Naive thymus-derived CD8-positive, alpha-beta T cell (primary cell): ENCODE measurements at regions of chr16 and their contacts with region 1.

Region 1: DNA sequence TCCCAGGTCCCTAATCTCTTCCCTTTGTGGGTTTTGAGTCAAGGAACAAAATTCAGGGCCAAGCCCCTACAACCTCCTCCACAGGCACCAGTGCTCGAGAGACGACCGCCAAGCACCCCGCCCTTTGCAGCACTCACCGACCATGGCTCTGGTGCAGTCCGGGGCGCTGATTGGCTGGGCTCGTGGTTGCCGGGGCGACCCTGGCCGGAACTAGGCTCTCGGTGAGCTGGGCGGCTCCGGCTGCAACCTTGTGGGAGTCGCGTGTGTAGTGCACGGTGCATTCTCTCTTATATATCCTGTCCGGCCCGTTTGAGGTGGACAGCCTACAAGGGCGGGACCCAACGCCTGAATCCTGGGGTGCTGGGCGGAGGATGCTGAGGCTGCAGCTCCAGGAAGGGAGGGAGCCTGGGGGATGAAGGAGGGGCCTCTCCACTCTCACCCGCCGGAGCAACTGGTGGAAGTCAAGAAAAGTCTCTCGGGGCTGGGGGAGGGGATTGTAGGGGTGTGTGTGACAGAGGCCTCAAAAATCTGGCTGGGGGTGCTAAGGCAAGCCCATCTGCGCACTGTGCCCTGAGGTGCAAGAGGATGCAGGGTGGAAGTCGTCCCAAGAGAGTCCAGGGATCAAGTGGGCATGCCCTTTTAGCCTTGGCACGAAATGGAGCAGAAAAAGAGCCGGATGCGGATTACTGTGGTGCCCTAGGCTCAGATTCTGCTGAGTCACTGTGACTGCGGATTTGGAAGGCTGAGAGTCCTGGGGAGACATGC is at the start of gene NQO1:
- DNase-seq: peak; percentile 66 to 92 (median 81)
- ATAC-seq: peak; percentile 98 to 99
- H3K4me3 Mint-ChIP-seq: peak within 1 kb of the TSS; percentile 88 to 98 (median 94)
- H3K27ac Mint-ChIP-seq: peak within 1 kb of the TSS; percentile 81 to 97 (median 91)
- H3K4me1 Mint-ChIP-seq: peaks cover 11 to 37% (median 25%) of the 10 kb centered on the region in 4 donors
- H3K27me3 Mint-ChIP-seq: peaks cover 0 to 2% (median 0%) of the 10 kb centered on the region in 5 donors
- polyA plus RNA-seq, gene NQO1: 2.5 to 4.1 (median 3.0) TPM

Region 2: GRCh38 chr16:69754469-69755310 is 28.2 kb after region 1 on chr16 and contains the start of gene NOB1:
- POLR2A ChIA-PET with region 1: interaction called, 28 read pairs
- DNase-seq: peak; percentile 91 to 99 (median 97)
- ATAC-seq: peak; percentile 98
- H3K4me3 Mint-ChIP-seq: peak within 1 kb of the TSS; percentile 96 to 100 (median 100)
- H3K27ac Mint-ChIP-seq: peak within 1 kb of the TSS; percentile 98 to 100 (median 99)
- H3K4me1 Mint-ChIP-seq: peaks cover 8 to 35% (median 28%) of the 10 kb centered on the region in 4 donors
- H3K27me3 Mint-ChIP-seq: no peaks in the 10 kb centered on the region
- polyA plus RNA-seq, gene NOB1: 35.1 to 60.3 (median 48.6) TPM

Region 3: DNA sequence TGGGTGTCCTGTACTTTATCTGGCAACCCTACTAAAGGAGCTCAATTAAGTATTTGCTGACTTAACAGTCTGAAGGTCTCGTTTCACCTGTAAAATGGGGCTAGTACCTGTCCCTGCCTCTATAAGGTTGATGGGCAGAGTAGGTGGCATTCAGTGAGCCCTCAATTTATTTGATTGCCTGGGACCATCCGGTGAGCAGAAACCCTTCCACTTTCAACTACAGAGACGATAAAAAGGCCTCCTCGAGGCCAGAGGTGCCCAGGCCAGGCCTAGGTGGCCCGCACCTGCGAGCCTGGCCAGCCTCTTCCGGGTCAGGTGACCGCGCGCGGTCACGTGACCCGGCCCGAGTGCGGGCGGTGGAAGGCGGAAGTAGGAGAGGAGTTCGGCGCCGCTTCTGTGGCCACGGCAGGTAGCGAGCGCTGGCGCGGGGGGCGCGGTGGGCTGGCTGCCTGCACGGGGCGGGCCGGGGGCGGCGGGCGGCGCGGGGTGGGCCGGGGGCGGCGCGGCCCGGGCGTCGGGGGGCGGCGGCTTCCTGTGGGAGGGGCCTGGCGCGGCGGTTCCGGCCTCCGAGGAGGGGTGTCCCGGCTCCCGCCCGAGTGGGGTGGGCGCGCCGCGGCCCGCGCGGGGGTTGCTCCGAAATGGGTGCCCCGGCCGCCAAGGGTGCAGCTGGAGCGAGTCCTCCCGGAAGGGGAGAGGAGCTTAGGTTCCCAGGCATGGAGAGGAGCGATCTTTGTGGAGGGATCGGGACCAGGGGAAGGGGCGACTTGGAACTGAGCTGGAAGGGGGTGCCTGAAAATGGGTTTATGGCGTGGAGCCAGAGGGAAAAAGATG is 35.7 kb after region 1 on chr16 and contains the start of gene WWP2:
- POLR2A ChIA-PET with region 1: interaction called, 17 read pairs
- DNase-seq: peak; percentile 71 to 90 (median 82)
- ATAC-seq: peak; percentile 76 to 82
- H3K4me3 Mint-ChIP-seq: peak within 1 kb of the TSS; percentile 89 to 97 (median 94)
- H3K27ac Mint-ChIP-seq: peak within 1 kb of the TSS; percentile 87 to 99 (median 98)
- H3K4me1 Mint-ChIP-seq: peaks cover 13 to 39% (median 35%) of the 10 kb centered on the region in 4 donors
- H3K27me3 Mint-ChIP-seq: no peaks in the 10 kb centered on the region
- polyA plus RNA-seq, gene WWP2: 27.0 to 39.5 (median 31.3) TPM